ENCODE measurements at regions of chr7 and their contacts with region 1.

Region 1: GRCh38 chr7:151244196-151244840 is 4.2 kb downstream of the SMARCD3 start:
- DNase-seq: peak in 2 of 5 donors; percentile 52 to 60
- H3K4me3 ChIP-seq: no peak overlapping the region
- H3K27ac ChIP-seq: no peak overlapping the region
- H3K4me1 ChIP-seq: peaks cover 13% of the 10 kb centered on the region
- H3K27me3 ChIP-seq: no peaks in the 10 kb centered on the region
- CTCF ChIP-seq: peak; percentile 45 to 57 (median 52)
- EP300 ChIP-seq: no peak
- POLR2A ChIP-seq: no peak

Region 2: DNA sequence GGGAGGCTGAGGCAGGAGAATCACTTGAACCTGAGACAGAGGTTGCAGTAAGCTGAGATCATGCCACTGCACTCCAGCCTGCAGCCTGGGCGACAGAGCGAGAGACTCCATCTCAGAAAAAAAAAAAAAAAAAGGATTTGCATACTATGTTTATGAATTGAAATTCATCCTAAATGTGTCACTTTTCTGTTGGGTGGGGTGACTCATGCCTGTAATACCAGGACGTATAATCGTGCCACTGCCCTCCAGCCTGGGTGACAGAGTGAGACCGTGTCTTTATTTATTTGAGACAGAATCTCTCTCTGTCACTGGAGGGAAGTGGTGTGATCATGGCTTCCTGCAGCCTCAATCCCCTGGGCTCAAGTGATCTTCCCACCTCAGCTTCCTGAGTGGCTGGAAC is 1999.1 kb before region 1 on chr7:
- intact Hi-C with region 1: loop called in 1 of 4 experiments (anchors 5 kb)
- DNase-seq: no peak
- H3K4me3 ChIP-seq: no peak overlapping the region
- H3K27ac ChIP-seq: no peak overlapping the region
- H3K4me1 ChIP-seq: peaks cover 7% of the 10 kb centered on the region
- H3K27me3 ChIP-seq: no peaks in the 10 kb centered on the region
- CTCF ChIP-seq: no peak
- EP300 ChIP-seq: no peak
- POLR2A ChIP-seq: no peak

Region 3: DNA sequence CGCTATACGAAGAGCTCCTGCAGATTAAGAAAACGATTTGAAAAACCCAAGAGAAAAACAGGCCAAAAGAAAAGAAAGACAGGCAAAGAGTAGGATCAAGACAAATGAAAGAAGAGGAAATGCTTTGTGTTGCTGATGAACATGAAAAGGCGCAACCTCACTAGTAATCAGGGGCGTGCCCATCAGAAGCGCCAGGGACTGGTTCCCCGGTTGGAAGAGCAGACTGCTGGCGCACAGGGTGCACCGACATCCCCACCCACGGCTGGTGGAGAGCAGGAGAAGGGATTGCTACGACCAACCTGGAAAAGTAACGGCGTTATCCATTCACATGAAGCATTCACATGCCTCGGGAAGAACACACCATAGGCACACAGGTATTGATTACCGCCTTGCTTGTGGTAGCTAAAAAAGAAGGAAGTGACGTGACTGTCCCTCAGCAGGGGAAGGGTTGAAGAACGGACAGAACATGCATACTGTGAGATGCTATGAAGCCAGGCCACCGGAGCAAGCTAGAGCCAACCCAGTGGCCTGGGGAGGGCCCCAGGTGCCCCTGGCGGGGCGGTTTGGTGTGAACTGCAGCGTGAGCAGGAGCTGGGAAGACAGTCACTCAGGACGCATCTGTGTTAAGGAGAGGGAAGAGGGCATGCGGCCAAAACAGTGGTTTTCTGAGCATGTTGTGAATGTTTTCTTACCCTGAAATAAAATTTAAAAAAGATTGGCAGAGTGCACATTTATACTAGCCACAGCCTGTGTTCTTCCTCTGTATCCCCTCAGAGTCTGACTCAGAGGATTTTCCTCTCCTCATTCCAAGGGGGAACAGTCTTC is 139.7 kb before region 1 on chr7:
- intact Hi-C with region 1: no loop called
- DNase-seq: no peak
- H3K4me3 ChIP-seq: no peak overlapping the region
- H3K27ac ChIP-seq: no peak overlapping the region
- H3K4me1 ChIP-seq: peaks cover 4% of the 10 kb centered on the region
- H3K27me3 ChIP-seq: no peaks in the 10 kb centered on the region
- CTCF ChIP-seq: no peak
- EP300 ChIP-seq: no peak
- POLR2A ChIP-seq: no peak